Calu3 (cell line): ENCODE measurements at regions of chr1 and their contacts with region 1.

Region 1: DNA sequence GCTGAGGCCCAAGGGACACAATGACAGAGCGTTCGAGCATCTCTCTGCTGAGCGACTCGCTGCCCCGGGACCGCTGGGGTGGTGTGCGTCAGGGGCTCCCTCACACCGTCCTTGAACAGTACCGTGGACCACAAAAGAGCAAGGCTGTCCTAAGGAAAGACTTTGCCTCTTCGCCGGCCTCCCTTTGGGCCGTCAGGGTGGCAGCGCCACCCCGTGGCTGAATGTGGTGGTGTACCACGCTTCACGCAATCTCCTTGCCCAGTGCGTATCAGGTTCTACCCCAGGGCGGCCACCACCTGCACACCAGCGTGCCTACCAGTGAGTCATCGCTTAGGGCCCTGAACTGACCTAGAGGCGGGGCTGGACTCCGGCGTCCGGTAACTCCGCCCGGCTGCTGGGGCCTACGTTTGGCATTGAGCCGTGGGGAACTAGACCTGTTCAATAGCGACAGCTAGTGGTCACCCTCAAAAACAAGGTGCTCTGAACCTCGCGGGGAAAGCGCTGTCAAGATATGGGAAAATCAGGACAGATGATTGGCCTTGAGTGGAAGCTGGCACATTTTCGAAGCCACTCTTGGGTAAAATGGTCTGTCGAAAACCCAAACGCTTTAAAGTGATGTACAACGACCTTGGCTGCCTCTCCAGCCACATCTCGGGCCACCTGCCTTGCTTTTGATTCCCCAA is 8.1 kb upstream of the TRAF3IP3 start:
- DNase-seq: peak; percentile 99
- H3K4me3 Mint-ChIP-seq: peak overlapping the region; percentile 14
- H3K27ac Mint-ChIP-seq: no peak overlapping the region
- H3K4me1 Mint-ChIP-seq: peaks cover 16% of the 10 kb centered on the region
- H3K27me3 Mint-ChIP-seq: no peaks in the 10 kb centered on the region
- CTCF ChIP-seq: peak; percentile 95

Region 2: DNA sequence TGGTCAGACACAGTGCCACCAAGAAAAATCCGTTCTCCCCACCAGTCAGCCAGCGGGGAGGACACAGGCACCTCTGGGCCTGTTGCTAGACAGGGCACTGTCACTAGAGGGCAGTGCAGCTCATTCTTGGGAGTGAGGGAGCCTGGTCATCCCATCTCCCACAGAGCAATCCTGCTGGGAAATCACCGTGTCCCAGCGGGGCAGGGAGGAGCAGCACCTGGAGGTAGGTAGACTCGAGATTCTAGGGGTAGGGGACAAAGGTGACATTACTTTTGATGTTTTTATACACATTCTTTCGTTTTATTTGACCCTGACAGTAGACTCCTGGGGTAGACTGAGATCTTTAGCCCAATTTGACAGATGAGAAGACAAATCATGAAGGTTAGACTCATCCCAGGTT is 170.9 kb before region 1 on chr1:
- CTCF ChIA-PET with region 1: interaction called, 3 read pairs
- intact Hi-C with region 1: loop called (anchors 2 kb)
- DNase-seq: peak; percentile 93
- H3K4me3 Mint-ChIP-seq: no peak overlapping the region
- H3K27ac Mint-ChIP-seq: no peak overlapping the region
- H3K4me1 Mint-ChIP-seq: peaks cover 7% of the 10 kb centered on the region
- H3K27me3 Mint-ChIP-seq: peaks cover 48% of the 10 kb centered on the region
- CTCF ChIP-seq: peak; percentile 91

Region 3: DNA sequence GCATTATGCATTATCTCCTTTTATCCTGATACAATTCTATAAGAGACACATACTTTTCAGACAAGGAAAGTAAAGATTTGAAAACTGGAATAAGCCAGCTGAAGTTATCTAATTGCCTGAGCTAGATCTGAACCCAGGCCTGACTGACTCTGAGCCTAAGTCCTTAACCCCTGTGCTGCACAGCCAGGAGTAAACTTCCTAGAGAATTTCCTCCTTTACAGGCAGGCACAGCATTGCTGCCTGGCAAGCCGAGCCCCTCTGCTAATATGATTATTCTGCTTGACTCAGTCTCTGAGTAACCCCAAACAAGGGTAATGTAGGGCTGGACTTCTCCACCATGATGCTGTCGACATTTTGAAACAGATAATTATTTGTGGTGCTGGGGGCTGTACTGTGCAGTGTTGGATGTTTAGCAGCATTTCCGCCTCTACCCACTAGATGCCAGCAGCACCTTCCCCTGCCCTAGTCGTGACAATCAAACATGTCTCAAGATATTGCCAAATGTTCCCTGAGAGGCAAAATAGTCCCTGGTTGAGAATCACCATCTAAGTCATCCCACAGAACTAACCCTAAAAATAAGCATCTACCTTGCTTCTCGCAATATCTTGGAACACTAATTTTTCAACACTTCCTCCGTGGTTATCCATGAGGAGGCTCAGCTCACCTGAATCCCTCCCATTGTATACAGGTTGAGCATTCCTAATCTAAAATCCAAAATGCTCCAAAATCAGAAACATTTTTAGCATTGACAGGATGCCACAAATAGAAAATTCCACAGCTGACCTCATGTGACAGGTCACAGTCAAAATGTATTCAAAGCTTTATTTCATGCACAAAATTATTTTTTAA is 145.7 kb before region 1 on chr1:
- CTCF ChIA-PET with region 1: no interaction called
- intact Hi-C with region 1: loop called (anchors 1 kb)
- DNase-seq: peak; percentile 61
- H3K4me3 Mint-ChIP-seq: no peak overlapping the region
- H3K27ac Mint-ChIP-seq: no peak overlapping the region
- H3K4me1 Mint-ChIP-seq: no peaks in the 10 kb centered on the region
- H3K27me3 Mint-ChIP-seq: peaks cover 40% of the 10 kb centered on the region
- CTCF ChIP-seq: peak; percentile 85

Region 4: DNA sequence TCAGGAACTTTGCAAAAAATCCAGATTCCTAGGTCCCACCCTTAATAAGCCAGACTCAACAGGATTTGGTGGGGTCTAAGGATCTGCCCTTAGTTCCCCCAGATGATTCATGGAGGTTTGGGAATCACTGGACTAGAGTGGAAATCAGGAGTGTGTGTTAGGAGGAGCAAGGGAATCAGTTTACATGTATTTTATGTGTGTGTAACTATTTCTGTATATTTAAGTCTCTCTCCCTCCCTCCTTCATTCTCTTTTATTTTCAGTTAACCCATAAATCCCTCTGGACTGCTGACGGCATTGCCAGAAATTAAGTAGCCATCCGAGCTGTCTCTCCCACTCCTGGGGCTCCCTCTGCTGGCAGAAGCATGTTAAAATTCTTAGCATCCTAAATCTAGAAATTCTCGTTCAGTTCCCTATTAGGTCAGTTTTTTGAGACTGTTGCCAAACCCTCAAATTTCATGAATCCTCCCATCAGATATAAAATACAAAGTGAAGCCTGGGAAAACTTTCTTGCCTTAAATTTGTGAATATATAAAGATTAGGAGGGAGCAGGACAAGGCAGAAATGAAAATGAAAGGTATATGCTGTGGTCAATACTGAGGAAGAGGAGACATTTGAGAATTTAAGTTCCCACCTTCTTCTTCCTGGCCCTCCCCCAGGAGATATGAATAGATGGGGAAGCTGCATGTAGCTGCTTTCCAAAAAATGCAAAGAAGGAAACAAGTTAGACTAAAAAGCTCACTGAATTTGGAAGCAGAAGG is 54.8 kb before region 1 on chr1:
- CTCF ChIA-PET with region 1: no interaction called
- intact Hi-C with region 1: loop called (anchors 1 kb)
- DNase-seq: peak; percentile 90
- H3K4me3 Mint-ChIP-seq: no peak overlapping the region
- H3K27ac Mint-ChIP-seq: peak overlapping the region; percentile 76
- H3K4me1 Mint-ChIP-seq: peaks cover 35% of the 10 kb centered on the region
- H3K27me3 Mint-ChIP-seq: peaks cover 20% of the 10 kb centered on the region
- CTCF ChIP-seq: peak; percentile 81

Region 5: GRCh38 chr1:209710093-209710492 is 37.6 kb before region 1 on chr1:
- CTCF ChIA-PET with region 1: no interaction called
- intact Hi-C with region 1: loop called (anchors 5 kb)
- DNase-seq: no peak
- H3K4me3 Mint-ChIP-seq: no peak overlapping the region
- H3K27ac Mint-ChIP-seq: no peak overlapping the region
- H3K4me1 Mint-ChIP-seq: peaks cover 39% of the 10 kb centered on the region
- H3K27me3 Mint-ChIP-seq: no peaks in the 10 kb centered on the region
- CTCF ChIP-seq: no peak

Region 6: GRCh38 chr1:209790286-209791193 is 42.8 kb after region 1 on chr1:
- CTCF ChIA-PET with region 1: no interaction called
- intact Hi-C with region 1: no loop called
- DNase-seq: no peak
- H3K4me3 Mint-ChIP-seq: no peak overlapping the region
- H3K27ac Mint-ChIP-seq: no peak overlapping the region
- H3K4me1 Mint-ChIP-seq: peaks cover 31% of the 10 kb centered on the region
- H3K27me3 Mint-ChIP-seq: no peaks in the 10 kb centered on the region
- CTCF ChIP-seq: no peak

Region 7: GRCh38 chr1:209827384-209828262 is 79.9 kb after region 1 on chr1 and contains the start of gene UTP25:
- CTCF ChIA-PET with region 1: interaction called, 6 read pairs
- intact Hi-C with region 1: loop called (anchors 5 kb)
- DNase-seq: peak; percentile 94
- H3K4me3 Mint-ChIP-seq: peak within 1 kb of the TSS; percentile 82
- H3K27ac Mint-ChIP-seq: peak within 1 kb of the TSS; percentile 92
- H3K4me1 Mint-ChIP-seq: peaks cover 67% of the 10 kb centered on the region
- H3K27me3 Mint-ChIP-seq: no peaks in the 10 kb centered on the region
- CTCF ChIP-seq: peak; percentile 59
- total RNA-seq, gene UTP25: 18.6 and 19.1 TPM in 2 replicates